ENCODE measurements at regions of chr13 and their contacts with region 1.

Region 1: GRCh38 chr13:82356667-82357410 is 1525.4 kb downstream of the SLITRK1 start:
- DNase-seq: no peak
- H3K4me3 Mint-ChIP-seq: no peak overlapping the region
- H3K27ac Mint-ChIP-seq: no peak overlapping the region
- H3K4me1 Mint-ChIP-seq: no peaks in the 10 kb centered on the region
- H3K27me3 Mint-ChIP-seq: no peaks in the 10 kb centered on the region
- CTCF ChIP-seq: no peak

Region 2: GRCh38 chr13:82305601-82306000 is 51.2 kb before region 1 on chr13:
- CTCF ChIA-PET with region 1: no interaction called
- intact Hi-C with region 1: no loop called
- DNase-seq: no peak
- H3K4me3 Mint-ChIP-seq: no peak overlapping the region
- H3K27ac Mint-ChIP-seq: no peak overlapping the region
- H3K4me1 Mint-ChIP-seq: no peaks in the 10 kb centered on the region
- H3K27me3 Mint-ChIP-seq: no peaks in the 10 kb centered on the region
- CTCF ChIP-seq: no peak

Region 3: GRCh38 chr13:82407321-82407720 is 50.5 kb after region 1 on chr13:
- CTCF ChIA-PET with region 1: no interaction called
- intact Hi-C with region 1: no loop called
- DNase-seq: no peak
- H3K4me3 Mint-ChIP-seq: no peak overlapping the region
- H3K27ac Mint-ChIP-seq: no peak overlapping the region
- H3K4me1 Mint-ChIP-seq: no peaks in the 10 kb centered on the region
- H3K27me3 Mint-ChIP-seq: no peaks in the 10 kb centered on the region
- CTCF ChIP-seq: no peak

Region 4: GRCh38 chr13:82522872-82523271 is 166.0 kb after region 1 on chr13:
- CTCF ChIA-PET with region 1: no interaction called
- intact Hi-C with region 1: no loop called
- DNase-seq: no peak
- H3K4me3 Mint-ChIP-seq: no peak overlapping the region
- H3K27ac Mint-ChIP-seq: no peak overlapping the region
- H3K4me1 Mint-ChIP-seq: no peaks in the 10 kb centered on the region
- H3K27me3 Mint-ChIP-seq: no peaks in the 10 kb centered on the region
- CTCF ChIP-seq: no peak

Region 5: GRCh38 chr13:82976499-82976898 is 619.7 kb after region 1 on chr13:
- CTCF ChIA-PET with region 1: no interaction called
- intact Hi-C with region 1: loop called (anchors 10 kb)
- DNase-seq: no peak
- H3K4me3 Mint-ChIP-seq: no peak overlapping the region
- H3K27ac Mint-ChIP-seq: no peak overlapping the region
- H3K4me1 Mint-ChIP-seq: no peaks in the 10 kb centered on the region
- H3K27me3 Mint-ChIP-seq: no peaks in the 10 kb centered on the region
- CTCF ChIP-seq: no peak

Measured in Calu3 (cell line).